AG04449 (cell line): ENCODE measurements at regions of chr4 and their contacts with region 1.

Region 1: DNA sequence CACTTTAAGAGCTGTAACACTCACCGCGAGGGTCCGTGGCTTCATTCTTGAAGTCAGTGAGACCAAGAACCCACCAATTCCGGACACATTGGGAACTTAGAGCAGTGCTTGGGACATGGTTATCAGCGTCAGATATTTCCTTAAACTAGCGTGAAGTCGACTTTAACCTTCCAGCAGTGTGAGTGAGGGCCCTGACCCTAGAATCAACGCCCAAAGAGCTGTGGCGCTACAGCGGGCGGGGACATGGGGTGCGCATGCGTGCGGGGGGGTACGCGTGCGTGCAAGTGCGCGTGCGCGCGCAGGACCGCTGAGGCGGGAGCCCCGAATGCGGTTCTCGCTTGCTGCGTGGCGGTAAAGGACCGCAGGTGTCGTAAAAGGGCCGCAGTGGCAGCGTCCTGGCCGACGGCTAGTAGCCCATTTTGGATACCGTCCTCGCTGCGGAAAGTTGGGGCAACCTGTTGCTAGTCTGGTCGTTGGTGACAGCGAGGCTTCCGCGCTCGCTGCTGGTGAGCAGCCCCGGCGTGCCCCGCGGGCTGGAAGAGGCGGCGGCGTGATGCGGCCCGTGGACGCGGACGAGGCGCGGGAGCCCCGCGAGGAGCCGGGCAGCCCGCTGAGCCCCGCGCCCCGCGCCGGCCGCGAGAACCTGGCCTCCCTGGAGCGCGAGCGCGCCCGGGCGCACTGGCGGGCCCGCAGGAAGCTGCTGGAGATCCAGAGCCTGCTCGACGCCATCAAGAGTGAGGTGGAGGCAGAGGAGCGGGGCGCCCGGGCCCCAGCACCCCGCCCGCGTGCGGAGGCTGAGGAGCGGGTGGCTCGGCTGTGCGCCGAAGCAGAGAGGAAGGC is 19.8 kb upstream of the S100P start:
- DNase-seq: peak; percentile 74
- H3K4me3 ChIP-seq: peak overlapping the region; percentile 73
- CTCF ChIP-seq: no peak

Region 2: DNA sequence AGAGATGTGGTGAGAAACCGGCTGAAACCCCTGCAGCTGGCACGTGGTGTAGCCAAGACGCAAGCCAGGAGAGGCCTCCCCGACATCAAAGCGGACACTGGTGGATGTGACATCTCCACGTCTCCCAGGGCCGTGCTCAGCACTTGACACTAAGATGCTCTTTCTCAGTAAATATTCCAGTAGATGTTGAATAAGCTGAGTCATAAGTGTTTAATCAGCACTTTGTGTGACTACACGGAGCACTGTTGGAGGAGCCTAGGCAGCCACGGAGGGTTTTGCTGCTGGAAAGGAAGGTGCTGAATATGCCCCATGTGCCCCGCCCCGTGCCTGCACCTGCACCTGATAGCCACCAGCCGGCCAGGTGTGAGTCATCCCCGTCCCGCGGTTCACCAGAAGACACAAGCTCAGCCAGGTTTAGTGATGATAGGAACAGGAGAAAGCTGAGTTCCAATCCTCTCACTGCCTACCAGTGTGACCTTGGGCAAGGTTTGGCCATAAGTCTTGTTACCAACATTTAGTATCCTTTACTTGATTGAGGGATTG is 626.7 kb before region 1 on chr4:
- CTCF ChIA-PET with region 1: no interaction called
- POLR2A ChIA-PET with region 1: no interaction called
- DNase-seq: no peak
- H3K4me3 ChIP-seq: no peak overlapping the region
- CTCF ChIP-seq: no peak

Region 3: DNA sequence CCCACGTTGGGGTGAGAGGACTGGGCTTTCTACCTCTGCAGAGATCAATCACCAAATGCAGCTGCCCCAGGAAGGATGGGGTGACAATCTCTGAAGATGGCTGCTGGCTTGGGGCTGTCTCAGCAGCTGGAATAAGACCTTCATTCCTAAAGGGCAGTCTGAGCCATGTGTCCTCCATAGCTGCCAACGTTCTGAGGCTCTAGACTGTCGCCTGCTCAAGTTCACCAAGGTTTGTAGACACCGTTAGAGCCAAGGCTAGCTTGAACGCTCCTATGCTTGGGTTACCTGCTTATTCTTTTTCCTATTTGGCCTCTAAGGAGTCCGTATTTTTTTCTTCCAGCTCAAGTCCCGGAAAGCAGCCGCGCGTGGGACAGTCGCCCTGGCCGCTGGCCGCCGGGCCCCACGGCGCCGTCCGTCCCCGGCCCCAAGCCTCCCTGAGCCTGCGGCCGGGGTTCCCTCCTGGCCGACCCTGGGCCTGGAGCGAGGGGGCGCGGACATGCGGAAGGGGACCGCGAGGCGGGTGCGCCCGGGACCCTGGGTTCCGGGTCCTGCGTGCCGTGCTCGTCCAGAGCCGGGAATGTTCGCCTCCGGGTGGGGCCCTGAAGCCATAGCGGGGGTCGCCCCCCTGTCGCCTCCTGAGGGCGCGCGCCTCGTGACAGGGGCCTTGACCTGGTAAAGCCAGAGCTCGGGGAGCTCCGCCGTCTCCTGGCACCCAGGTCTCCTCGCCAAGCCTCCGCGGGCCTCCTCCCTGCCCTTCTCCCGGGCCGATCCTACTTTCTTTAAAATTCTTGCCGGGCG is 10.1 kb before region 1 on chr4:
- CTCF ChIA-PET with region 1: interaction called, 7 read pairs
- POLR2A ChIA-PET with region 1: interaction called, 13 read pairs
- DNase-seq: no peak
- H3K4me3 ChIP-seq: no peak overlapping the region; the same call in 1 of the 2 replicates
- CTCF ChIP-seq: no peak